Gastrocnemius medialis (tissue), 4 donors: ENCODE measurements at regions of chr12 and their contacts with region 1.

Region 1: GRCh38 chr12:117236456-117237001 is 46.3 kb upstream of the FBXO21 start:
- DNase-seq: peak; percentile 53 to 62
- ATAC-seq: peak; percentile 58 to 64
- H3K4me3 ChIP-seq: no peak overlapping the region
- H3K27ac ChIP-seq: no peak overlapping the region
- H3K4me1 ChIP-seq: no peaks in the 10 kb centered on the region
- H3K27me3 ChIP-seq: no peaks in the 10 kb centered on the region
- CTCF ChIP-seq: peak; percentile 43 to 85 (median 74)
- POLR2A ChIP-seq: no peak

Region 2: DNA sequence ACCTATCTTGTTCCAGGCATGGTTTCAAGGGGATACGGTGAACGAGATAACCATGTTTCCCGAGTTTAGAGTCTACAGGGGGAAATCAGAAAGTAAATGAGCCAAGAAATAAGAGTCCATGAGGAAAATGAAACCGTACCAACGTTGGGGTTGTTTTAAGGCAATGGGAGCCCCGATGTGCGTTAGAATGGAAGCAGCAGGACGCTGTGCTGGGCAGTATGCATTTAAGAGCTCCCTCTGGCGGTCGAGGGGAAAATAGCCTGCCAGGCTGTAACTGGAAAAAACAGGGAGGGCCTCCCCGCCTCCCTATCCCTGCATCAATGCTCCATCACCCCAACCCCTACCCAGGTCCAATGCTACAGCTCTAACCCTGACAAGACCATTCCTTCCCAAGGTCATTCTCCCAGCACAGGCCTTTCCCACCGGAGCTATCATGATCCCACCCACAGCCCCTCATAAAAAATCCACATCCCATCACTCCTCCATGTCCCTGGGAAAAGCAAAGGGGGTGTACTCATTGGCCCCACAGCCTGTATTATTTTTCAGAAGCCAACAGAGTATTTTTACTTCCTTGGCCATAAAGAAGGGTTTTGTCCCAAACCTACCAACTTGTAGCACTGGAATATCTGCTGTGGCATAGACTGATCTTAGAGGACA is 351.2 kb after region 1 on chr12:
- in situ Hi-C with region 1: loop called in 2 of 4 experiments (anchors 25 kb)
- intact Hi-C with region 1: loop called (anchors 5 kb)
- DNase-seq: peak; percentile 27 to 65
- ATAC-seq: peak; percentile 83 to 91
- H3K4me3 ChIP-seq: peak overlapping the region in 3 of 4 donors; percentile 27 to 33 (median 30)
- H3K27ac ChIP-seq: no peak overlapping the region
- H3K4me1 ChIP-seq: no peaks in the 10 kb centered on the region
- H3K27me3 ChIP-seq: peaks cover 0 to 5% (median 0%) of the 10 kb centered on the region in 3 donors
- CTCF ChIP-seq: peak; percentile 87 to 92 (median 90)
- POLR2A ChIP-seq: no peak

Region 3: DNA sequence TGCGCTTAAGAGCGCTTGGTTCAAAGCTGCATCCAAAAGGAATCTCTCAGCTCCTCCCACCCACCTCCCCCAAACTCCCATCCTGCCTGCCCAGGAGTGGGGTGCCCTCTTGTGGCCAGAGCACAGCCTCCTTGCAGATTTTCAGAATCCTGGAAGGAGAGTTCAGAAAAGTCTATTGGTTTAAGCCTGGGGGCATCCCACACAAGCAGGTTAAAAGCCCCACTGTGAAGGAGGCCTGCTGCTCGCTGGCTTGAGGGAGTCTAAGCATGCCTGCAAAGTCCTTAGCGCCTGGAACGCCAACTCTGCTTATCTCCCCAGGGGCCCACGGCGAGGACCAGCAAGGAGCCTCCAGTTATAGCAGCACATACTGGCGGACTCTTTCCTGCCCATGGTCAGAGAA is 435.2 kb after region 1 on chr12:
- in situ Hi-C with region 1: no loop called
- intact Hi-C with region 1: loop called (anchors 5 kb)
- DNase-seq: peak in 1 of 2 donors; percentile 15
- ATAC-seq: peak in 1 of 2 donors; percentile 33
- H3K4me3 ChIP-seq: no peak overlapping the region
- H3K27ac ChIP-seq: no peak overlapping the region
- H3K4me1 ChIP-seq: no peaks in the 10 kb centered on the region
- H3K27me3 ChIP-seq: no peaks in the 10 kb centered on the region
- CTCF ChIP-seq: peak in 4 of 5 experiments; percentile 22 to 61 (median 44)
- POLR2A ChIP-seq: no peak

Region 4: GRCh38 chr12:117820216-117820907 is 583.8 kb after region 1 on chr12:
- in situ Hi-C with region 1: loop called in 1 of 4 experiments (anchors 10 kb)
- intact Hi-C with region 1: no loop called
- DNase-seq: no peak
- ATAC-seq: no peak
- H3K4me3 ChIP-seq: no peak overlapping the region
- H3K27ac ChIP-seq: no peak overlapping the region
- H3K4me1 ChIP-seq: no peaks in the 10 kb centered on the region
- H3K27me3 ChIP-seq: no peaks in the 10 kb centered on the region
- CTCF ChIP-seq: no peak
- POLR2A ChIP-seq: no peak

Region 5: GRCh38 chr12:117836999-117837736 is 600.6 kb after region 1 on chr12:
- in situ Hi-C with region 1: no loop called
- intact Hi-C with region 1: loop called (anchors 2 kb)
- DNase-seq: peak; percentile 44 to 59
- ATAC-seq: peak; percentile 67 to 74
- H3K4me3 ChIP-seq: no peak overlapping the region
- H3K27ac ChIP-seq: no peak overlapping the region
- H3K4me1 ChIP-seq: no peaks in the 10 kb centered on the region
- H3K27me3 ChIP-seq: peaks cover 0 to 3% (median 0%) of the 10 kb centered on the region in 3 donors
- CTCF ChIP-seq: peak; percentile 85 to 92 (median 90)
- POLR2A ChIP-seq: no peak

Region 6: DNA sequence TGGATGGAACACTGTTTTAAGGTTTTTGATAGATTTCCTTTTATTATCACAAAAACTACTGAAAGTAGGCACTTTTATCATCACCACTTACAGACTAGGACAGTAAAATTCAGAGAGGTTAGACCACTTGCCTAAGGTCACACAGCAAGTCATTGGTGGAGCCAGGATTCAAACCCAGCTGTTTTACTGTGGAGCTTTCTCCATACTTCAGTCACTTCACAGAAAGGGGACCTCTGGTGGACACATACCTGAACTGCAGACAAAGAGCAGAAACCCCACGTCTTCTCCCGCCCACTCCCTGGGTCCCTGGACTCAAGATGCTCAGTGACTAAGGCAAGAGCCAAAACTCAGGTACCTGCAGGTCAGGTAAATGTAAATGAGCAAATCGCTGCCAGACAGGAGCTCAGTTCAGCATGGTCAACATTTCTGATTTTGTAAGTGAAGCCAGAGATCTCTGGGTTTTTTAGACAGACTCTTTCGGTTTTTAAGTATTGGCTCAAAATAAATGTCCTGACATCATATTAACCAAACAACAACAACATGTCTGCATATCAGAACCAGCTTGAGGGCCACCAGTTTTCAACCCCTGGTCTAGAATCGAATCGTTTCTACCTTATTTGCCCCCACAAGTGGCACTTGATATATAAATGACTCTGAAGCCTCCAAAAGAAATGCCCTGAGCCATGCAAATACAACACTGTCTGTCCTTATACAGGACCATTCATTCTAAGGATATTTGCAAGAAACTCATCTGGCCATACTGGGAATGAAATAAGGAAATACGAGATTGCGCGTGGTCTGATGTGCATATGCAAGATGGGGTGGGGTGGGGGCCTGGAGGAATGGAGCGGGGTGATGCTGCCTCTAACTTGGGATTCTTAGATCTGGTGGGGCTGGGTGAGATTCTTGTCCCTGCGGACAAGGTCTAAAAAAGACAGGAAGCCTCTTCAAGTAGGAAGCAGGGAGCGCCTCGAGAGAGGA is 621.4 kb after region 1 on chr12:
- in situ Hi-C with region 1: loop called in 1 of 4 experiments (anchors 10 kb)
- intact Hi-C with region 1: no loop called
- DNase-seq: no peak
- ATAC-seq: no peak
- H3K4me3 ChIP-seq: no peak overlapping the region
- H3K27ac ChIP-seq: no peak overlapping the region
- H3K4me1 ChIP-seq: no peaks in the 10 kb centered on the region
- H3K27me3 ChIP-seq: peaks cover 0 to 3% (median 0%) of the 10 kb centered on the region in 3 donors
- CTCF ChIP-seq: peak in 3 of 5 experiments; percentile 28 to 52 (median 40)
- POLR2A ChIP-seq: no peak